ENCODE measurements at regions of chr17 and their contacts with region 1.

Region 1: DNA sequence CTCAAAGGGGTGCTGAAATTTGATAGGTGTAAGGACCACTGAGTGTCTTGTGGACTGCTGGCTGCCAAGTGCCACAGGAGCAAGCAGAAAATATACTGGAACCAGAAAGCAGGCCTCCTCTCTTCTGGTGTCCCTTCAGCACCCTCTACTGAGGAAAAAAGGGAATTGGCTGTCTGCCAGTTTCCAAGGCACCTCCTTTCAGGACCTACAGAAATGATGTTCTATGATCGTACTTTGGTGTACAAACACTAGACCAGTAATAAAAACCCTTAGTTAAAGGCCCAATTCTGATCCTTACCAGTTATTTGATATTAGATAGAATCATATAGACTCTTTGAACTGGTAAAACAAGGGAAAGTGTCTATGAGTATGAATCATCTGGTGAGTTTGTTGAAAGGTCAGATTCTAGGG is 35.8 kb upstream of the BCAS3 start:
- DNase-seq: peak; percentile 48 to 49
- H3K4me3 ChIP-seq: no peak overlapping the region
- H3K27ac ChIP-seq: 0 out of 2 replicates have a peak overlapping the region, but pooled peaks have one; percentile 0
- H3K4me1 ChIP-seq: peaks cover 6% of the 10 kb centered on the region; the same call in 1 of the 2 replicates
- H3K27me3 ChIP-seq: no peaks in the 10 kb centered on the region
- CTCF ChIP-seq: peak; percentile 68

Region 2: DNA sequence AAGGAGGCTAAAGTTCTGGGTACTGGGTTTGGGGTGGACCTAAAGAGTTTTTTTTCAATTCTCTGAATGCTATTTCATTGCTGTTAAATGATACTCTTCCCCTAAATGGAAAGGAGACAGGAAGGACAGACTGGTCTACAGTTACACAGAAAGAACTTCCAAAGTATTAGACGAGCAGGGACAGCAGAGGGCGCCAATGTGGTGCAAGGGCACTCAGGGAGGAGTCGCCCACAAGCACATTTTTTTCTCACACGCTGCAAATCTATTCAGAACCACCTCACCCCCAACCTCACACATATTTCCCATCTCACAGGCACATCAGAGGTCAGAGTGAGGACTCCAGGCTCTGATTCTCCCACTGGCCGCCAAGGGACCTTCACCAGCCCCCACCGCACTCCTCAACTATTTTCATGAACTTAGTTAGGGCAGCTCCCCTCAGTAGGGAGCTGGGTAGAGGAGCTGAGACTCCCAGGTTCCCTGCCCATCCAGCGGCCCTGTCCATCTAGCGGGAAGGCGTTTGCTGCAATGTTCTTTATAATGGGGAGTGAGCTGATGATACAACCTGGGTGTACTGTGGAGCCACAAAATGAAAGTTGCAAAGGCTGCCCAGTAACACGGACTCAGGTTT is 498.8 kb before region 1 on chr17:
- CTCF ChIA-PET with region 1: interaction called, 15 read pairs
- POLR2A ChIA-PET with region 1: no interaction called
- intact Hi-C with region 1: no loop called
- DNase-seq: peak; percentile 80 to 84
- H3K4me3 ChIP-seq: peak overlapping the region; percentile 49; the same call in 1 of the 2 replicates
- H3K27ac ChIP-seq: no peak overlapping the region
- H3K4me1 ChIP-seq: peaks cover 10% of the 10 kb centered on the region
- H3K27me3 ChIP-seq: no peaks in the 10 kb centered on the region
- CTCF ChIP-seq: peak; percentile 82

Region 3: GRCh38 chr17:60153676-60154390 is 488.0 kb before region 1 on chr17:
- CTCF ChIA-PET with region 1: interaction called, 11 read pairs
- POLR2A ChIA-PET with region 1: no interaction called
- intact Hi-C with region 1: no loop called
- DNase-seq: no peak
- H3K4me3 ChIP-seq: no peak overlapping the region
- H3K27ac ChIP-seq: no peak overlapping the region
- H3K4me1 ChIP-seq: peaks cover 8% of the 10 kb centered on the region; the same call in 1 of the 2 replicates
- H3K27me3 ChIP-seq: peaks cover 24% of the 10 kb centered on the region
- CTCF ChIP-seq: no peak

Region 4: DNA sequence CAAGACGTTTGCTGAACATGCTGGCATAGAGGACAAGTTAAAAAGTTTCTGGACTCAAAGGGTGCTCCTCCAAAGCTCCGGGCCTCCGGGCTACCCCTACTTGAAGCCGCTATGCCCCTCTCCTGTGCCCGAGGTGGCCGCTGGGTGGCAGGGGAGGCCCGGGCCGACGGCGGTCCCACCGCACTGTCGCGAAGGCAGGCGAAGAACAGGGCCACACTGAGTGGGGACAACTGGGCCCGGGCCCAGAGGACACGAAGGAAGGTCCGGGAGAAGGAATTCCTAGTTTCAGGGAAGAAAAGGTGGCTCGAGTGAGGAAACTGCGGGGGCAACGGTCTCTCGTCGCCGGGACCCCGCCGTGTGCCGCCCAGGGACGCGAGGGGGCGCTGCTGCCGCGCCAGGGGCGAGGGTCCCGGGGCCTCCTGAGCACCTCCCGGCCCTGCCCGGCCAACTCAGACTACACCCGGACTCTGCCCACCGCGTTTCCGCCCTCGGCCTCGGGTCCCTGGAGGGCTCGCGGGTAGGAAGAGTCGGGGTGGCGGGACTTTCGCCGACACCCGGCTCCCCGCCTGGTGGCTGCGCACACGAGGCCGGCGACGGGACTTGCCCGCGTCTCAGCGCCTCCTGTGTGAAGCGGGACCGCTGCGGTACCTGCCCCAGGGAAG is 220.4 kb before region 1 on chr17:
- CTCF ChIA-PET with region 1: no interaction called
- POLR2A ChIA-PET with region 1: no interaction called
- intact Hi-C with region 1: loop called (anchors 1 kb)
- DNase-seq: peak in 1 of 2 experiments; percentile 52
- H3K4me3 ChIP-seq: peak overlapping the region; percentile 30; the same call in 1 of the 2 replicates
- H3K27ac ChIP-seq: no peak overlapping the region
- H3K4me1 ChIP-seq: no peaks in the 10 kb centered on the region; the same call in 1 of the 2 replicates
- H3K27me3 ChIP-seq: no peaks in the 10 kb centered on the region
- CTCF ChIP-seq: peak; percentile 64

Region 5: GRCh38 chr17:60435244-60436167 is 206.3 kb before region 1 on chr17:
- CTCF ChIA-PET with region 1: interaction called, 3 read pairs
- POLR2A ChIA-PET with region 1: no interaction called
- intact Hi-C with region 1: loop called (anchors 2 kb)
- DNase-seq: peak; percentile 55 to 72
- H3K4me3 ChIP-seq: no peak overlapping the region
- H3K27ac ChIP-seq: no peak overlapping the region
- H3K4me1 ChIP-seq: no peaks in the 10 kb centered on the region
- H3K27me3 ChIP-seq: no peaks in the 10 kb centered on the region
- CTCF ChIP-seq: peak; percentile 98

Region 6: GRCh38 chr17:60720763-60721531 is 79.1 kb after region 1 on chr17:
- CTCF ChIA-PET with region 1: no interaction called
- POLR2A ChIA-PET with region 1: no interaction called
- intact Hi-C with region 1: no loop called
- DNase-seq: peak; percentile 22 to 46
- H3K4me3 ChIP-seq: no peak overlapping the region
- H3K27ac ChIP-seq: no peak overlapping the region
- H3K4me1 ChIP-seq: no peaks in the 10 kb centered on the region
- H3K27me3 ChIP-seq: no peaks in the 10 kb centered on the region
- CTCF ChIP-seq: peak; percentile 96

Measured in PC-9 (cell line).